Caco-2 (cell line): ENCODE measurements at regions of chr17 and their contacts with region 1.

Region 1: DNA sequence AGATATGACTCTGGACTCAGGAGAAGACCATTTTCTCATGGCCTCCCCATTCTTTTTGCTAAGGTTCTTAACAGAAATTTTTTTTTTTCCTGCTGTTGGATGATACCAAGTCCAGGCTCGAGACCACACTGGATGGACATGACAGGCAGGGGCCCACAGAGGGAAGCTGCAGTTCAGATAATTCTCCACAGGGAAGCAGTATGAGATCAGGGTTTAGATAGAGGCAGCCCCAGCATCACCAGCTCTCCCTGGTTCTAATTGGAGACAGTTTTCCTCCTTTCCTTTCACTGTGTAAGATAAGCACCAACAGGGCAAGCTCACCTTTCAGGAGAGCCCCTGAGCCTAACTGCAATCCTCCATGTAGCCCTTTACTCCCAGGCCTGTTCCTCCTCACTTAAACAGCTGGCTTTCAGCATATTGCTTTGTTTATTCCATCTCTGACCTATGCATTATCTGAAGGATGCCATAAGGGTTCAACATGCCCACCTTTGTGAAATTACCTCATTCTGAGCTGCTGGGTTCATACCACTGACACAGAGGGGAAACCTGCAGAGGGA is 108.1 kb downstream of the SNX11 start:
- DNase-seq: peak; percentile 79 to 86
- H3K4me3 ChIP-seq: no peak overlapping the region
- H3K4me3 Mint-ChIP-seq: no peak overlapping the region
- H3K27ac Mint-ChIP-seq: no peak overlapping the region
- H3K4me1 ChIP-seq: peaks cover 9% of the 10 kb centered on the region; the same call in 1 of the 2 replicates
- H3K4me1 Mint-ChIP-seq: peaks cover 5% of the 10 kb centered on the region
- H3K27me3 ChIP-seq: no peaks in the 10 kb centered on the region
- H3K27me3 Mint-ChIP-seq: no peaks in the 10 kb centered on the region
- CTCF ChIP-seq: peak; percentile 97 to 98

Region 2: GRCh38 chr17:48100591-48101011 is 115.1 kb before region 1 on chr17:
- CTCF ChIA-PET with region 1: no interaction called
- POLR2A ChIA-PET with region 1: no interaction called
- intact Hi-C with region 1: no loop called
- DNase-seq: peak; percentile 88 to 91
- H3K4me3 ChIP-seq: peak overlapping the region; percentile 83
- H3K4me3 Mint-ChIP-seq: peak overlapping the region; percentile 93
- H3K27ac Mint-ChIP-seq: peak overlapping the region; percentile 79
- H3K4me1 ChIP-seq: peaks cover 8% of the 10 kb centered on the region
- H3K4me1 Mint-ChIP-seq: peaks cover 7% of the 10 kb centered on the region
- H3K27me3 ChIP-seq: no peaks in the 10 kb centered on the region
- H3K27me3 Mint-ChIP-seq: no peaks in the 10 kb centered on the region
- CTCF ChIP-seq: no peak

Region 3: DNA sequence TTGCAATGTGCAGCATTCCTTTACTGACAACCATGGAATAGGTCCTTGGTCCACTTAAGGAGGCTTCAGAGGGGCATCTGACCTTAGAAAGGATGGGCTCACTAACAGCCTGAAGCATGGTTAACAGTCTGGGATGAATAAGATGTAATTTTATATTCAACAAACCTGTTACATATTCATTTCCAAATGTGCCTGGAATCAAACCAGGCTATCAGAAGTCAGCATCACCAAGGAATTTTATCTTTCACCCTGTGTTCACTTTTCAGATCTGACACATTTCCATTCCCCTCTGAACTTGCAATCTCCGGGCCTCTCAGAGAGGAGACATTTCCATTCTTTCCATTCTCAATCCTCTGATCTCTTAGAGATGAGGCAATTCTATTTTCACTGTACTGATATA is 45.7 kb before region 1 on chr17:
- CTCF ChIA-PET with region 1: no interaction called
- POLR2A ChIA-PET with region 1: no interaction called
- intact Hi-C with region 1: no loop called
- DNase-seq: no peak
- H3K4me3 ChIP-seq: no peak overlapping the region
- H3K4me3 Mint-ChIP-seq: no peak overlapping the region
- H3K27ac Mint-ChIP-seq: no peak overlapping the region
- H3K4me1 ChIP-seq: peaks cover 10% of the 10 kb centered on the region
- H3K4me1 Mint-ChIP-seq: peaks cover 15% of the 10 kb centered on the region
- H3K27me3 ChIP-seq: no peaks in the 10 kb centered on the region
- H3K27me3 Mint-ChIP-seq: peaks cover 9% of the 10 kb centered on the region
- CTCF ChIP-seq: no peak

Region 4: GRCh38 chr17:48241131-48241591 is 25.5 kb after region 1 on chr17:
- CTCF ChIA-PET with region 1: interaction called, 15 read pairs
- POLR2A ChIA-PET with region 1: interaction called, 4 read pairs
- intact Hi-C with region 1: loop called (anchors 1 kb)
- DNase-seq: peak in 1 of 2 experiments; percentile 68
- H3K4me3 ChIP-seq: no peak overlapping the region
- H3K4me3 Mint-ChIP-seq: no peak overlapping the region
- H3K27ac Mint-ChIP-seq: no peak overlapping the region
- H3K4me1 ChIP-seq: peaks cover 63% of the 10 kb centered on the region
- H3K4me1 Mint-ChIP-seq: peaks cover 57% of the 10 kb centered on the region
- H3K27me3 ChIP-seq: no peaks in the 10 kb centered on the region
- H3K27me3 Mint-ChIP-seq: no peaks in the 10 kb centered on the region
- CTCF ChIP-seq: no peak

Region 5: GRCh38 chr17:48335858-48336500 is 120.3 kb after region 1 on chr17:
- CTCF ChIA-PET with region 1: interaction called, 20 read pairs
- POLR2A ChIA-PET with region 1: no interaction called
- intact Hi-C with region 1: loop called (anchors 1 kb)
- DNase-seq: peak in 1 of 2 experiments; percentile 79
- H3K4me3 ChIP-seq: no peak overlapping the region
- H3K4me3 Mint-ChIP-seq: no peak overlapping the region
- H3K27ac Mint-ChIP-seq: no peak overlapping the region
- H3K4me1 ChIP-seq: no peaks in the 10 kb centered on the region
- H3K4me1 Mint-ChIP-seq: no peaks in the 10 kb centered on the region
- H3K27me3 ChIP-seq: no peaks in the 10 kb centered on the region; the same call in 1 of the 2 replicates
- H3K27me3 Mint-ChIP-seq: peaks cover 18% of the 10 kb centered on the region
- CTCF ChIP-seq: peak; percentile 90 to 96

Region 6: GRCh38 chr17:48457080-48457836 is 241.6 kb after region 1 on chr17:
- CTCF ChIA-PET with region 1: interaction called, 5 read pairs
- POLR2A ChIA-PET with region 1: no interaction called
- intact Hi-C with region 1: loop called (anchors 2 kb)
- DNase-seq: peak; percentile 80 to 90
- H3K4me3 ChIP-seq: peak overlapping the region; percentile 17
- H3K4me3 Mint-ChIP-seq: peak overlapping the region; percentile 69
- H3K27ac Mint-ChIP-seq: peak overlapping the region; percentile 31
- H3K4me1 ChIP-seq: peaks cover 18% of the 10 kb centered on the region
- H3K4me1 Mint-ChIP-seq: peaks cover 19% of the 10 kb centered on the region
- H3K27me3 ChIP-seq: no peaks in the 10 kb centered on the region; the same call in 1 of the 2 replicates
- H3K27me3 Mint-ChIP-seq: peaks cover 16% of the 10 kb centered on the region
- CTCF ChIP-seq: peak; percentile 100

Region 7: GRCh38 chr17:48500966-48501426 is 285.3 kb after region 1 on chr17:
- CTCF ChIA-PET with region 1: no interaction called
- POLR2A ChIA-PET with region 1: no interaction called
- intact Hi-C with region 1: no loop called
- DNase-seq: peak in 1 of 2 experiments; percentile 48
- H3K4me3 ChIP-seq: no peak overlapping the region
- H3K4me3 Mint-ChIP-seq: no peak overlapping the region
- H3K27ac Mint-ChIP-seq: no peak overlapping the region
- H3K4me1 ChIP-seq: peaks cover 39% of the 10 kb centered on the region
- H3K4me1 Mint-ChIP-seq: peaks cover 46% of the 10 kb centered on the region
- H3K27me3 ChIP-seq: no peaks in the 10 kb centered on the region
- H3K27me3 Mint-ChIP-seq: peaks cover 3% of the 10 kb centered on the region
- CTCF ChIP-seq: peak; percentile 22 to 62